B cell (primary cell): ENCODE measurements at regions of chr16 and their contacts with region 1.

Region 1: DNA sequence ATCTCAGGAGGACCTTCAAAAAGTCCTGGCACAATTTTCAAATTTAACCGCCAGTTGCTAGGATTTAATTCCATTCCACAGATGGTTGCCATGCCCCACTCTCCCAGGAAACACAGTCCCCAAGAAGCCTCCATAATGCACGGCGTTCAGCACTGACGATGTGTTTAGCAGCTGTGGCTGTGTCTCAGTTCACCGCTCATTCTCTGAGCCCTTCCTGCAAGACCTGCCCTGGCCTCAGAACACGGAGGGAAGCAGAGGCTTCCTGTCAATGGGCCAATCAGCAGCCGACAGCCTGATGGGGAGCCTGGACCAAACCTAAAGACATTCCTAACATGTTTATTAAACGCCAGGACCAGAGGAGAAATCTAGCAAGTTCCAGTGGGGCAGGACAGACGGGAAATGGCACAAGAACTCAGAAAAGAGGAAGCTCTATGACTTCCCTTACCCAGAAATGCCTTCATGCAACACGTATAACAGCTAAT is 4.9 kb downstream of the MYLK3 start:
- DNase-seq: peak; percentile 71
- ATAC-seq: peak; percentile 76
- H3K4me3 ChIP-seq: peak overlapping the region in 4 of 5 experiments; percentile 27 to 68 (median 49)
- H3K4me3 Mint-ChIP-seq: peak overlapping the region; percentile 83
- H3K27ac ChIP-seq: peak overlapping the region; percentile 69 to 76
- H3K27ac Mint-ChIP-seq: peak overlapping the region; percentile 95
- H3K4me1 ChIP-seq: peaks cover 22 to 25% of the 10 kb centered on the region in 2 donors
- H3K4me1 Mint-ChIP-seq: peaks cover 26% of the 10 kb centered on the region
- H3K27me3 ChIP-seq: no peaks in the 10 kb centered on the region
- H3K27me3 Mint-ChIP-seq: no peaks in the 10 kb centered on the region
- CTCF ChIP-seq: no peak

Region 2: GRCh38 chr16:46801428-46802049 is 58.3 kb after region 1 on chr16:
- CTCF ChIA-PET with region 1: interaction called, 11 read pairs
- POLR2A ChIA-PET with region 1: no interaction called
- intact Hi-C with region 1: loop called (anchors 5 kb)
- DNase-seq: peak; percentile 30
- ATAC-seq: no peak
- H3K4me3 ChIP-seq: no peak overlapping the region
- H3K4me3 Mint-ChIP-seq: no peak overlapping the region
- H3K27ac ChIP-seq: no peak overlapping the region
- H3K27ac Mint-ChIP-seq: no peak overlapping the region
- H3K4me1 ChIP-seq: no peaks in the 10 kb centered on the region
- H3K4me1 Mint-ChIP-seq: peaks cover 4% of the 10 kb centered on the region
- H3K27me3 ChIP-seq: no peaks in the 10 kb centered on the region
- H3K27me3 Mint-ChIP-seq: no peaks in the 10 kb centered on the region
- CTCF ChIP-seq: peak; percentile 44

Region 3: GRCh38 chr16:46808997-46809396 is 65.7 kb after region 1 on chr16:
- CTCF ChIA-PET with region 1: no interaction called
- POLR2A ChIA-PET with region 1: no interaction called
- intact Hi-C with region 1: loop called (anchors 5 kb)
- DNase-seq: peak; percentile 54
- ATAC-seq: peak; percentile 75
- H3K4me3 ChIP-seq: peak overlapping the region in 1 of 5 experiments; percentile 25
- H3K4me3 Mint-ChIP-seq: no peak overlapping the region
- H3K27ac ChIP-seq: no peak overlapping the region
- H3K27ac Mint-ChIP-seq: no peak overlapping the region
- H3K4me1 ChIP-seq: peaks cover 17 to 20% of the 10 kb centered on the region in 2 donors
- H3K4me1 Mint-ChIP-seq: peaks cover 24% of the 10 kb centered on the region
- H3K27me3 ChIP-seq: no peaks in the 10 kb centered on the region
- H3K27me3 Mint-ChIP-seq: no peaks in the 10 kb centered on the region
- CTCF ChIP-seq: no peak